ENCODE measurements at regions of chr11 and their contacts with region 1.

Region 1: DNA sequence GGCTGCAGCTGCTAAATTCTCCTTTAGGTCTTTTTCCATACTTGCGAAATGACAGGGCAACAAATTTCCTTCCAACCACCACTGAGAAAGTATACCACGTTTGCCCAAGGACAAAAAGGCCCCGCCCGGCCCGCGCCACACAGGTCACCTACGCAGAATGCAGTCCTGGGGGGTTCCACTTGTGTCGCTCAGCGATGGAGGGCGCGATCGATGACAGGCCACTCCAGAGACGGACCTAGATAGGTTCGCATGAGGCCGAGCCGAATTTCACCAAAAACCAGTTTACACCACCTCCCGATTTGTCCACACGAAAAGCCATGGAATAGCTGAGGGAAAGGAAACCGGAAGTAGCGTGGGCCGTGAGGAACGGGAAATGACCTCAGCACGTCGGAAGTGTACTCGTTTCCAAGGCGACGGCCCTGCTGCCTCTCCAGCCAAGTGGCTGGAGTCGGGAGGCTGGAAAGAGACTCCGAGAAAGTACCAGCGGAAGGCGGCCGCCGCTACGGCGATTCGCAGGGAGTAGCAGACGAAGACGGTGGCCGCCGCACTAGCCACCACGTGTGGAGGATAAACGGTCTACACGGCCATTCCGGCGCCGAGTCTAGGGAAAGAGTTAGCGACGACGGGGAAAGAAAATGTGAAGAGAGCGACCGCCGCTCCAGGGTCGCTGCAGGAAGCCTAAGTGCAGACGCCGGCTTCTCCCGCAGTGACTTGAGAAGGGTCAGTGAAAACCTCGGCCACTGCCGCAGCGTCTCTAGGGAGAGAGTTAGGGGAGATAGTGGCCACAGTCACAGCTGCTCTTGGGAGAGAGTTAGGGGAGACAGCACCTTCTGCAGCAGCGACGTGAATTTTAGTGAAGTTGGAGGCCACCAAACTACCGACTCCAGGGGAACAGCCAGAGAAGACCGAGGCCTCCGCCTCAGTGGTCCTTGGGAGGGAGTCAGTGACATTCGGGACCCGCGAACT is at the start of gene ANKRD42:
- DNase-seq: peak; percentile 99
- H3K4me3 ChIP-seq: peak within 1 kb of the TSS; percentile 72 to 86 (median 79)
- H3K27ac ChIP-seq: peak within 1 kb of the TSS; percentile 90 to 95 (median 92)
- H3K4me1 ChIP-seq: peaks cover 29 to 53% (median 45%) of the 10 kb centered on the region in 4 donors
- H3K27me3 ChIP-seq: no peaks in the 10 kb centered on the region
- CTCF ChIP-seq: peak in 1 of 3 experiments; percentile 8
- EP300 ChIP-seq: no peak
- POLR2A ChIP-seq: peak; percentile 51
- total RNA-seq, gene ANKRD42: 11.8 to 13.0 (median 12.6) TPM

Region 2: GRCh38 chr11:83156150-83156995 is 37.2 kb before region 1 on chr11:
- intact Hi-C with region 1: loop called (anchors 5 kb)
- DNase-seq: peak; percentile 100
- H3K4me3 ChIP-seq: peak overlapping the region; percentile 77 to 97 (median 92)
- H3K27ac ChIP-seq: peak overlapping the region; percentile 94 to 100 (median 98)
- H3K4me1 ChIP-seq: peaks cover 16 to 27% (median 24%) of the 10 kb centered on the region in 4 donors
- H3K27me3 ChIP-seq: no peaks in the 10 kb centered on the region
- CTCF ChIP-seq: no peak
- EP300 ChIP-seq: no peak
- POLR2A ChIP-seq: peak; percentile 94

Measured in esophagus muscularis mucosa (tissue), 4 donors.